ENCODE measurements at regions of chr2 and their contacts with region 1.

Region 1: GRCh38 chr2:232418466-232419244 is 12.0 kb downstream of the ALPG start:
- DNase-seq: peak; percentile 64
- H3K4me3 Mint-ChIP-seq: peak overlapping the region; percentile 76
- H3K27ac Mint-ChIP-seq: no peak overlapping the region
- H3K4me1 Mint-ChIP-seq: peaks cover 3% of the 10 kb centered on the region
- H3K27me3 Mint-ChIP-seq: peaks cover 54% of the 10 kb centered on the region

Region 2: DNA sequence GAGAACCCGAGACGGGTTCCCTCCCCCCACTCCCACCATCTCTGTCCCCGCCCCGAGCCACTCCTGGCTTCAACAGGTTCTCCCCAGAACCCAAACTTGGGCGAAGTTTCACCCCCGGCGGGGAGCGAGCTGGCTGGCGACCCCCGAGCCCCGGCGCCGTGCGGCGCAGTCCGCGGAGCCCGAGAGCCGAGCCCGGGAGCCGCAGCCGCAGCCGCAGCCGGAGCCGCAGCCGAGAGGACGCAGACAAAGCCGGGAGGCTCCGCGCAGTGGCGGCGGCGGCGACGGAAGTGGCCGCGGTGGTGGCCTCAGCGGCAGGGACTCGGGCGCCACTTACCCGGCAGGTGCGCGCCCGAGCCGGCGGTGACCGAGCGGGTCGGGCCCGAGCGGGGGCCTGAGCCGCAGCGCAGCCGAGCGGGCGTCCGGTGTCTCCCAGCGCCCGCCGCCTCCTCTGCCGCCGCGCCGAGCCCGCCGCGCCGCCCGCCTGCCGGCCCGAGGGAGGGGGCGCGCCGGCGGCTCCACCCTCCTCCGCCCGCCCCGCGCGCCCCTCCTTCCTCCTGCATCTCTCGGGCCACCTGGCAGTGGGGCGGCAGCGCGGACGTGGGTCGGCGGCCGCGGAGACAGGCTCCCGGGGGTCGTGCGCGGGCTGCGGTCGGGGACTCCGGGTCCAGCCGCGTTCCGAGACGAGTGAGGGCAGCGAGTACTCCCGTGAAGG is 68.9 kb after region 1 on chr2 and contains the start of gene ECEL1:
- intact Hi-C with region 1: loop called (anchors 10 kb)
- DNase-seq: no peak
- H3K4me3 Mint-ChIP-seq: no peak within 1 kb of the TSS
- H3K27ac Mint-ChIP-seq: no peak within 1 kb of the TSS
- H3K4me1 Mint-ChIP-seq: peaks cover 4% of the 10 kb centered on the region
- H3K27me3 Mint-ChIP-seq: peaks cover 39% of the 10 kb centered on the region
- total RNA-seq, gene ECEL1: 0.19 TPM in 1 of 2 replicates, not detected in the other

Measured in activated CD4-positive, alpha-beta T cell treated with anti-CD3 and anti-CD28 coated beads, Interleukin-2, amount 10 ng/mL, durations not matched to agents 24 days and 14 days (primary cell).